Gastrocnemius medialis (tissue), 4 donors: ENCODE measurements at regions of chr4 and their contacts with region 1.

Region 1: DNA sequence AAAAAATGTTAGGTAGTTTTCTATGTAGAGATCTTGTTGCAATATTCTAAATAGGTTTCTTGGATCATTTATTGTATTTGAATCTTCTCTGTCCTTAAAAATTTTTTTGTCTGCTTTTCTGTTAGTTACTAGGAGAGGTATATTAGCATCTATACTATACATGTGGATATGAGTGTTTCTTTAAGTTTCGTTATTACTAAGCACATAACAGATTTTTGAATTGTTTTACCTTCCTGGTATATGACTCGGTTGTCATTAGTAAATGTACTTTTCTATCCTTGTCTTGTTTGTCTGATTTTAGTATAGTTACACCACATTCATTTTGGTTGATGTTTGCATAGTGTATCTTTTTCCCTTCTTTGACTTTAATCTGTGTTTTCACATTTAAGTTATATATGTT is 20.2 kb downstream of the PYURF start:
- DNase-seq: no peak
- ATAC-seq: no peak
- H3K4me3 ChIP-seq: no peak overlapping the region
- H3K27ac ChIP-seq: no peak overlapping the region
- H3K4me1 ChIP-seq: no peaks in the 10 kb centered on the region
- H3K27me3 ChIP-seq: no peaks in the 10 kb centered on the region
- CTCF ChIP-seq: no peak
- POLR2A ChIP-seq: no peak

Region 2: DNA sequence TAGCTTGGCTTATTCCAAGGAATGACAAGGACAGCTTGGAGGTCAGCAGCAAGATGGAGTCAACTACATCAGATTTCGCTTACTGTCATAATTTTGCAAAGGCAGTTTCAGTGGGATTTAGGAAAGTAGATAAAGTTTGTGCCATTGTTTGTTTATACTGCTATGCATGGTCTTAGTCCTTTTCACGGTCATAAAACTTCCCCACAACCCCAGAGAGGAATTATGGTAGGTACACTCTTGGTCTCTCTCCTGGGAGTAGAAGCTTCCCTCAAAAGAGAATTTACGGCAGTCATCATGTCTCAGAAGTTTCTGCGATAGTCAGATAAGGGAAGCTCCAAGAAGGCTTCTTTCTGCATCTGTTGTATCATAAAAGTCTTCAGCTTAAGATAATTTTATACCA is 152.6 kb before region 1 on chr4:
- in situ Hi-C with region 1: no loop called
- intact Hi-C with region 1: no loop called
- DNase-seq: no peak
- ATAC-seq: no peak
- H3K4me3 ChIP-seq: no peak overlapping the region
- H3K27ac ChIP-seq: no peak overlapping the region
- H3K4me1 ChIP-seq: no peaks in the 10 kb centered on the region
- H3K27me3 ChIP-seq: no peaks in the 10 kb centered on the region
- CTCF ChIP-seq: no peak
- POLR2A ChIP-seq: no peak

Region 3: DNA sequence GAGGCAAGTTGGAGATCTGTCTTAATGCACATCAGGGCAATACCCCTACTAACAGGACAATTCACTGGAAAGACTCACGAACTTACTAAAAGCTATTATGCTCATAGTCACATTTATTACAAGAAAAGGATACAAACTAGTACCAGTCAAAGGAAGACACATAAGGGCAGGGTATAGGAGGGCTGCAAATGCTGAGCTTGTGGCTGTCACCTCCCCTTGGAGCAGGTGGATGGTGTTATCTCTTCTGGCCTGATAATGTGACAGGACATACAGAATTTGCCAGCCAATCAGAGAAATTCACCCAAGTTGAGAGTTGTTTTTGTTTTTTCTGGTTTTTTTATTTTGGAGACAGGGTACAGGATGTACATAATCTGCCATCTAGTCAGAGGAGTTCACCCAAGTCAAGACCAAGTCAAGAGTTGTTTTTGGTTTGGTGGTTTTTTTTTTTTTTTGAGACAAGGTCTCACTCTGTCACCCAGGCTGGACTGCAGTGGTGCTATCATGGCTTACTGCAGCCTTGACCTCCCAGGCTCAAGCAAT is 37.6 kb before region 1 on chr4:
- in situ Hi-C with region 1: no loop called
- intact Hi-C with region 1: loop called (anchors 5 kb)
- DNase-seq: no peak
- ATAC-seq: no peak
- H3K4me3 ChIP-seq: no peak overlapping the region
- H3K27ac ChIP-seq: no peak overlapping the region
- H3K4me1 ChIP-seq: no peaks in the 10 kb centered on the region
- H3K27me3 ChIP-seq: no peaks in the 10 kb centered on the region
- CTCF ChIP-seq: no peak
- POLR2A ChIP-seq: no peak

Region 4: DNA sequence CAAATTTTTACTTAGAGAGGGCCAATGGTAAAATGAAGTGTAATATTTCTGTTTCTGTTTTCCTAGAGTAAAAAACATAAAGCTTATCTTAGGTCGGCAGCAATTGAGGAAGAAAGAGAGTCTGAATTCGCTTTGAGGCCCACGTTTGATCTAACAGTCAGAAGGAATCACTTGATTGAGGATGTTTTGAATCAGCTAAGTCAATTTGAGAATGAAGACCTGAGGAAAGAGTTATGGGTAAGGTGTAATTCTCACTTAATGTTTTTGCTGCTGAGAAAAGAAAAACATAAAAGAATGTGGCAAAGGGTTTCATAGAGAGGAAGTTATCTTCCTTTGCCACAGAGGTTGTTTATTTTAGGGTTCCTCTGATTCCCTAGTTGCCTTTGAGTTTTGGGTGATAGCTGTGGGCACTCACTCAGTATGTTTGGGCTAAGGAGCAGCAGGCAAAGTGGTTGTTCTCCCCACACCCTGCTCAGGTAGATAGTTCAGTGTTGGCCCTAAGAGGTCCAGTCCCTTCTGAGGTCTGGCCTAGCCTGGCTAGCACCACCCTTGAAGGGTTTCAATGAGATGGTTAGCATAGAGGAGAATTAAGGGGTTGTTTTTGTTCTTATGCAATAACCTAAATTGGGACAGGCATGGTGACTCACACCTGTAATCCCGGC is 14.1 kb before region 1 on chr4:
- in situ Hi-C with region 1: no loop called
- intact Hi-C with region 1: no loop called
- DNase-seq: no peak
- ATAC-seq: no peak
- H3K4me3 ChIP-seq: no peak overlapping the region
- H3K27ac ChIP-seq: no peak overlapping the region
- H3K4me1 ChIP-seq: no peaks in the 10 kb centered on the region
- H3K27me3 ChIP-seq: no peaks in the 10 kb centered on the region
- CTCF ChIP-seq: no peak
- POLR2A ChIP-seq: no peak